Endothelial cell of umbilical vein (primary cell): ENCODE measurements at regions of chr7 and their contacts with region 1.

Region 1: DNA sequence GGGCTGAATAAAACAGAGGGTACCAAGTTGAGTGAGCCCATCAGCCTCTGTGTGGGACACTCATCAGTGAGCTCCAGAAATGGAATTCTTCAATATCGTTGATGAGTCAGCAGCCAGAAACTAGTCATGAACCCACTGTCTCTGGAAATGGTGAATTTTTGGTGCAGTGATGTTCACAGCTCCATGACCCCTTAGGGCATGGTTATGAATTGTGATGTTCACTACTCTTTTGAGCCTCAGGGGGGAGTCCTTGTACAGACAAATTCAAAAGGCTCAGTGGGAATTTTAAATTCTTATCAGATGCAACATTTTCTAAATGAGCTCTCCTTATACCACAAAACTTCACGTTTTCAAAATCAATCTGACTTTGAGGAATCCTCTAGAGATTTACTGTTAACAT is 335.7 kb downstream of the PHTF2 start:
- DNase-seq: peak; percentile 24
- H3K4me3 ChIP-seq: no peak overlapping the region
- H3K27ac ChIP-seq: no peak overlapping the region
- H3K4me1 ChIP-seq: no peaks in the 10 kb centered on the region
- H3K27me3 ChIP-seq: no peaks in the 10 kb centered on the region
- CTCF ChIP-seq: peak; percentile 31 to 36
- POLR2A ChIP-seq: no peak

Region 2: DNA sequence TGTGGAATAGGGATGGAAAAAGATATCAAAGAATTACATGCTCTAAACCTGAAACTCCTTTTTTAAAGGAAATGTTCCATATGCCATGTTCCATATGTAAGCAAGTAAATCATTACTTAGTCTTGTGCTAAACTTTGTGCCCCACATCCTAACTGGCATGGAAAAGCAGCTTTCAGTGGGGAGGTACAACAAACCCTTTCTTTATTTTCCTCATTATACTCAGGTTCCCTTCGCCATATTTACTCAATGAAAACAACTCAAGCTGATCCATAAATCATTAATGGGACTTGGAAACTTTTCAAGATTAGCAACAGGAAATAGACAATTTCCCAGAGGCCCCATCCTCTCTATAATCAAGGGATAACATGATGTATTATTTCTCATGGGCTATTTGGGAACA is 774.2 kb before region 1 on chr7:
- CTCF ChIA-PET with region 1: no interaction called
- POLR2A ChIA-PET with region 1: no interaction called
- dilution Hi-C with region 1: no loop called
- intact Hi-C with region 1: no loop called
- DNase-seq: peak; percentile 49
- H3K4me3 ChIP-seq: no peak overlapping the region
- H3K27ac ChIP-seq: no peak overlapping the region
- H3K4me1 ChIP-seq: peaks cover 9% of the 10 kb centered on the region
- H3K27me3 ChIP-seq: no peaks in the 10 kb centered on the region
- CTCF ChIP-seq: no peak
- POLR2A ChIP-seq: no peak

Region 3: DNA sequence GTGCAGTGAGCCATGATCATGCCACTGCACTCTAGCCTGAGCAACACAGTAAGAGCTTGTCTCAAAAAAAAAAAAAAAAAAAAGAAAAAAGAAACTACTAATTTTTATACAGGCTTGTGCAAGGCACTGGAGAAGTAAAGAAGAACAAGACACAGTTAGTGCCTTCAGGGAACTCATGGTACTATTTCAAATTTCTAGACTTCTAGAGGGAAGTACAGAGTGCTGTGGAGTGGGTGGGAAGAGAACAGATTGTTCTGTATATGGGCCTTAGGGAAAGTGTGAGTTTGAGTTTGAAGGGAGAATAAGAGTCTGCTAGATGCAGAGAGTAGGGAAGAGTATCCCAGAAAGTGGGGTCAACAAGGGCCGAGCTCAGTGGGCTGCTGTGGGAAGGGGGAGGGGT is 100.8 kb before region 1 on chr7:
- CTCF ChIA-PET with region 1: no interaction called
- POLR2A ChIA-PET with region 1: no interaction called
- dilution Hi-C with region 1: no loop called
- intact Hi-C with region 1: no loop called
- DNase-seq: no peak
- H3K4me3 ChIP-seq: no peak overlapping the region
- H3K27ac ChIP-seq: no peak overlapping the region
- H3K4me1 ChIP-seq: no peaks in the 10 kb centered on the region
- H3K27me3 ChIP-seq: peaks cover 4 to 17% of the 10 kb centered on the region in 2 experiments
- CTCF ChIP-seq: no peak
- POLR2A ChIP-seq: no peak

Region 4: DNA sequence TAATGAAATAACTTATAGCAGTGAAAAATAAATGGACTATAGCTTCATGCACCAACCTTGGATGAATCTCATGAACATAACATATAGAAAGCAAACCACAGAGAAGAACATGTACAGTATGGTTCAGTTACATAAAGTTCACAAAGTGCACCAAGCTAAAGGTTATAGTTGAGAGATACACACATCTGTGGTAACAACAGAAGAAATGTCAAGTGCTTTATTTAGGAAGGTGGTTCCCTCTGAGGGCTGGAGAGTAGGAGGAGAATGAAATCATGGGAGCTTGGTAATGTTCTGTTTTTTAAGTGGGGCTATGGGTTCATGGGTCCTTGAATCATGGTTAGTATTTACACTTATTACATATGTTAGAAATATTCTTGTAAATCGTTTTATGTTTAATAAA is 12.4 kb before region 1 on chr7:
- CTCF ChIA-PET with region 1: interaction called, 11 read pairs
- POLR2A ChIA-PET with region 1: no interaction called
- dilution Hi-C with region 1: no loop called
- intact Hi-C with region 1: no loop called
- DNase-seq: no peak
- H3K4me3 ChIP-seq: no peak overlapping the region
- H3K27ac ChIP-seq: no peak overlapping the region
- H3K4me1 ChIP-seq: no peaks in the 10 kb centered on the region
- H3K27me3 ChIP-seq: no peaks in the 10 kb centered on the region
- CTCF ChIP-seq: no peak
- POLR2A ChIP-seq: no peak

Region 5: DNA sequence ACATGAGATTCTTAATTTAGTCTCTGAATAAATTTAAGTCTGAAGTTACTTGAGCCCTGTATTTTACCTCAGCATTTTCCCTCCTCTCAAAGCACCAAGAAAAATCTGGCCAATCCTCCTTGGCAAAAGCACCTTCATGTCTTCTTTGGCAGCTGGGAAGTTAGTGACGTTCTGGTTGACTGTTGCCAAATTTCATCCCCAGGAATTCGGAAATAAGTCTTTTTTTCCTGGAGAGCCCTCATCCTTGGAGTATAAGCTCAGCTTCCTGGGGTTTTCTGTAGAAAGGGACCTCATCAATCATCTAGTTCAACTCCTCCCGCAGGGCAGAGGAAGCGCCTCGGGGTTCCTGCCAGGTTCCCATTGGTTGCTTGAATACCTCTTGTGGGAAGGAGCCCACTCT is 41.9 kb after region 1 on chr7:
- CTCF ChIA-PET with region 1: interaction called, 3 read pairs
- POLR2A ChIA-PET with region 1: no interaction called
- dilution Hi-C with region 1: no loop called
- intact Hi-C with region 1: loop called (anchors 1 kb)
- DNase-seq: no peak
- H3K4me3 ChIP-seq: no peak overlapping the region
- H3K27ac ChIP-seq: no peak overlapping the region
- H3K4me1 ChIP-seq: no peaks in the 10 kb centered on the region
- H3K27me3 ChIP-seq: no peaks in the 10 kb centered on the region
- CTCF ChIP-seq: no peak
- POLR2A ChIP-seq: no peak

Region 6: DNA sequence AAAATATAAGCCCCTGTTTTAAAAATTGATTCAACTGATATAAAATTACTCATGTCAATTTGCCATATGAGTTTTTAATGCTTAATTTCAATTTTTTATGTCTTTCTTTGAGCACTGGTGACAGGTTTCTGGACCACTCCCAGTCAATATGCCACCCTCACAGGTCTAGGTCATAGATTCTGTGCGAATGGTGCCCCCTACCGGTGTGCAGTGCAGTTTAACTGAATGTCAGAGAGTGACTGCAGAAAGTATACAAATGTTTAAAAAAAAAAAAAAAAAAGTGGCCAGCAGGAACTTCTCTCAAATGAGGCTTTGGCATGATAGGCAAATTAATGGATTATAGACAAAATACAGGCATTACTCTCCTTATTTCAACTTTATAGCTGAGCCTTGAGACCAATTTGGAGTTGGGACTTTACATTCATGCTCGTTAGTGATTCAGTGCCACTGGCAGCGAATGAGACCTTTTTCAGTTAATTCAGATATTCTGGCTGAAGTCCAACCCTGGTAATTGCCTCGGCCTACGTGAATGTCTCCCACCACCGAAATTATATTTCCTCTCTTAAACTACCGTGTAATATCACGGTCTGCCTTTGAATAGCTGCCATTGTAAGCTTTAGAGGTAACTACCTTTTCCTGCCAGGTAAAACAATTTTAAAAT is 91.9 kb after region 1 on chr7:
- CTCF ChIA-PET with region 1: interaction called, 13 read pairs
- POLR2A ChIA-PET with region 1: no interaction called
- dilution Hi-C with region 1: no loop called
- intact Hi-C with region 1: no loop called
- DNase-seq: peak; percentile 25
- H3K4me3 ChIP-seq: no peak overlapping the region
- H3K27ac ChIP-seq: no peak overlapping the region
- H3K4me1 ChIP-seq: no peaks in the 10 kb centered on the region
- H3K27me3 ChIP-seq: no peaks in the 10 kb centered on the region
- CTCF ChIP-seq: peak; percentile 23
- POLR2A ChIP-seq: no peak

Region 7: DNA sequence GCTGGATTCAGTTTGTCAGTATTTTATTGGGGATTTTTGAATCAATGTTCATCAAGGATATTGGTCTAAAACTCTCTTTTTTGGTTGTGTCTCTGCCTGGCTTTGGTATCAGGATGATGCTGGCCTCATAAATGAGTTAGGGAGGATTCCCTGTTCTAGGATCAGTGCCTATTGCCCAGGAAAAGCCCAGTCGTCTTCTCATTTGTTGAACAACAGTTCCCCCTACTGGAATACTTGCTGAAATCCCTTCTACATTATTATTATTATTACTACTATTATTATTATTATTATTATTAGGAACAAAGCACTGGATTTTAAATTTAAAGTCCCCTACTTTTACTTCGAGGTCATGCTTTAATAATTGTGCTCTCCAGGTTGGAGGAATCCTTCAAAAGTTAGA is 790.3 kb after region 1 on chr7:
- CTCF ChIA-PET with region 1: interaction called, 10 read pairs
- POLR2A ChIA-PET with region 1: no interaction called
- dilution Hi-C with region 1: no loop called
- intact Hi-C with region 1: loop called (anchors 10 kb)
- DNase-seq: no peak
- H3K4me3 ChIP-seq: no peak overlapping the region
- H3K27ac ChIP-seq: no peak overlapping the region
- H3K4me1 ChIP-seq: no peaks in the 10 kb centered on the region
- H3K27me3 ChIP-seq: no peaks in the 10 kb centered on the region
- CTCF ChIP-seq: no peak
- POLR2A ChIP-seq: no peak

Region 8: GRCh38 chr7:79176859-79177477 is 1042.7 kb after region 1 on chr7:
- CTCF ChIA-PET with region 1: interaction called, 20 read pairs
- POLR2A ChIA-PET with region 1: no interaction called
- dilution Hi-C with region 1: no loop called
- intact Hi-C with region 1: no loop called
- DNase-seq: peak; percentile 53
- H3K4me3 ChIP-seq: no peak overlapping the region
- H3K27ac ChIP-seq: no peak overlapping the region
- H3K4me1 ChIP-seq: no peaks in the 10 kb centered on the region
- H3K27me3 ChIP-seq: no peaks in the 10 kb centered on the region
- CTCF ChIP-seq: peak; percentile 48 to 50
- POLR2A ChIP-seq: no peak

Region 9: DNA sequence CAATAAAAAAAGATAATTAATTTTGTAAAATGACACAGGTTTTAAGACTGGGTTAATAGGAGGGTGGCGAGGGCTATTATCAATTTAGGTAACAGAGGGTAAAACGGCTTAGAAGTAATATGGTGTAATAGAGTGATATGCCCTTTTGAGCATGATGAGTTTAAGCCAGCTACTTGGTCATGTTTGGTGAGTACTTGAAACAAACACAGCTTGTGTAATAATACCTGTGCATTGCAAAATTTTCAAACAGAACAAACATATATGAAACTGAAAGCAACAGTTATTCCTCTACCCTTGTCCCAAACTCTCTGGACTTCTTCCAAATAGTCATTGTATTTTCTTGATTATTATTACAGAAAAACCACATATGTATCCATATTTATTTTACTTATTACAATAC is 1077.5 kb after region 1 on chr7:
- CTCF ChIA-PET with region 1: no interaction called
- POLR2A ChIA-PET with region 1: no interaction called
- dilution Hi-C with region 1: no loop called
- intact Hi-C with region 1: no loop called
- DNase-seq: no peak
- H3K4me3 ChIP-seq: no peak overlapping the region
- H3K27ac ChIP-seq: no peak overlapping the region
- H3K4me1 ChIP-seq: no peaks in the 10 kb centered on the region
- H3K27me3 ChIP-seq: no peaks in the 10 kb centered on the region
- CTCF ChIP-seq: no peak
- POLR2A ChIP-seq: no peak

Region 10: DNA sequence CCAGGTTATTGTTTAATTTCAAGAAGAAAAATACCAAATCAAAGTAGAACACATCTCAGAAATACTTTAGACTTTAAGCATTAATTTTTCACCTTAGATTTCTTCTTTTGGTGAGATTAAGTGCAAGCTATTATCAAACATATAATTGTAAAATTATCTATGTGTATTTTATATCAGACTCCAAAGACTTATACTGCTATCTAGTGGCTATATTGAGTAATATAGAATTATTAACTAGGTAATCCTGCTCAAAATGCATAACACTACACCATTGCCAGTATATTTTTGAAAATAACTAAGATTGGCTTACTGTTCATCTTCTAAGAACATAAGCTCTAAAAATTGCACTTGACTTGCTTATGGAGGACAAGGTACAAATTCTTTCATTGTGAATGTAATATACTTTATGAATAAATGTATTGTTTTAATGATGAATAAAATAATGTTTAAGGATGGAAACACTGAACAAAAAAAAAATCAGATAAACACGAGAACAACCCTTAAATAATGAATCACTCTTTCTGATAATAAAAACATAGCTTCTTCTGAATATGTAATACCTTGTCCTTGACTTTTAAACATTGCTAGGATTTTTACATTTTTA is 1913.7 kb after region 1 on chr7:
- CTCF ChIA-PET with region 1: interaction called, 14 read pairs
- POLR2A ChIA-PET with region 1: no interaction called
- dilution Hi-C with region 1: no loop called
- intact Hi-C with region 1: no loop called
- DNase-seq: no peak
- H3K4me3 ChIP-seq: no peak overlapping the region
- H3K27ac ChIP-seq: no peak overlapping the region
- H3K4me1 ChIP-seq: no peaks in the 10 kb centered on the region
- H3K27me3 ChIP-seq: no peaks in the 10 kb centered on the region
- CTCF ChIP-seq: no peak
- POLR2A ChIP-seq: no peak